Posterior vena cava (tissue), 2 donors: ENCODE measurements at regions of chr2 and their contacts with region 1.

Region 1: DNA sequence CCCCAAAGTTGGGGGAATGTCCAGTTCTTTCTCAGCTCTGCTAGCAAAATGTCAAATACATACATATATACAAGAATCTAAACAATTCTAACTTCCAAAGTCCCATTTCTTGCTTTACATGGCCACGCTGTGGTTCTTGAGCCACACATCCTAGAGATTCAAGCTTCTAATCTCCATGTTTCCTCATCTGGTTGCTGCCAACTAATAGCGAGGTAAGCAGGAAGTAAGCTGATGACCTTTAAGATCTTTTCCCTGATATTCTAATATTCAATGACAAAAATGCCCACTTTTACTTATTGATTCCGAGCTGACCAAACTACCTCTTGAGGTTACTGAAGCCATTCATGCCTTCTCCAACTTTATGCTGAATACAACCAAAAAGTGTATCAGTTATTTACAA is 3.3 kb downstream of the VPS54 start:
- DNase-seq: no peak

Region 2: DNA sequence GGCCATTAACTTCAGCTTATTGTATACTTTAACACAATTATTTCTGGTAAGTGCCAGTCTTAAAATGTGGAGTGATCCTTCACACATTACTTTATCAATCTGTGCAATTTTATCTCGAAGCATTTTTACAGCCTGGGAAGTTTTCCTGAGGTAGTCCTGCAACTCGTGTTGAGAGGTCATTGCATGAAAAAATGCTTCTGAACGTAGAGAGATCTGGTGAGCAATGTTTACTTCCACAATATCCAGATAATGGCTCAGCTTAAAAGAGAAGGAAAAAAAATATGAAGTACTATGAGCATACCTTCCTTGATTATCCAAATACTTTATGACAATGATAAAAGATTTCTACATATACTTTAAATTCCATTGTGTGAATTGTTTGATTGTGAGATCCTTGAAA is 53.7 kb before region 1 on chr2:
- intact Hi-C with region 1: no loop called
- DNase-seq: no peak

Region 3: DNA sequence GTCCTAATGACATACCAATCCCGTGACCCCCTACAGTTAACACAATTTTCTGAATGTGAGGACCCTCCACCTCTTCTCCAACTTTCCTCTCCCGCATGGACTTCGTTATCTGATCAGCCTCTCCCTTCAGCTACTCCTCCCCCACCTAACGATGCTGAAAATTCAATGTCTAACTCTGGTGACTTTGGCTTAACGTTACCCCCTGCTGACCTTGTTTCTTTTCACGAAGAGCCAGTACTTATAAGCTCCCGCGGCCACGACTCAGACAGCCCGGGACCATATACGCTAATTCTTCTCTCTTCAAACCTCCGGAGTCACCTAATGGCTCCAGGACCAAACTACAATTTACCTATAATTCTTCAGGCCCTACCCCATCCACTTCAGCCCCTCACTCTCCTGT is 25.8 kb before region 1 on chr2:
- intact Hi-C with region 1: loop called in 1 of 2 experiments (anchors 1 kb)
- DNase-seq: no peak

Region 4: DNA sequence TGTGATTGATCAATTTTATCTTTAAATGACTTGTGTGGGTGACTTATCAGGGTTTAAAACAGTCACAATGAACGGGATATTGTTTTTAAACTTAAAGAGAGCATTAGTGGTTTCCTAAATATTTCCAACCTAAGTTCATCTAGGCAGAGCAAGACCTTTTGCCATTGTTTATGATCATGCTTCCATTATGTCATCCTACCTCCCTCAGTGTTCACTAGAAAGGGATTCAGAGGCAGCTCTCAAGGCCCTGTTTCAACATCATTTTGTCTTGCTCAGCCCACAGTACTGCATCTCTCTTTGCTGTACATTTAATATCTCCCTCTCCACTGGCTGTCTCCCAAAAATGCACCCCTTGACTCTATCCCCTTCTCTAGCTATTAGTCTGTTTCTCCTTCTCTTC is 149.8 kb after region 1 on chr2:
- intact Hi-C with region 1: no loop called
- DNase-seq: no peak